Activated CD4-positive, alpha-beta T cell treated with anti-CD3 and anti-CD28 coated beads for 36 hours (primary cell): ENCODE measurements at regions of chr19 and their contacts with region 1.

Region 1: DNA sequence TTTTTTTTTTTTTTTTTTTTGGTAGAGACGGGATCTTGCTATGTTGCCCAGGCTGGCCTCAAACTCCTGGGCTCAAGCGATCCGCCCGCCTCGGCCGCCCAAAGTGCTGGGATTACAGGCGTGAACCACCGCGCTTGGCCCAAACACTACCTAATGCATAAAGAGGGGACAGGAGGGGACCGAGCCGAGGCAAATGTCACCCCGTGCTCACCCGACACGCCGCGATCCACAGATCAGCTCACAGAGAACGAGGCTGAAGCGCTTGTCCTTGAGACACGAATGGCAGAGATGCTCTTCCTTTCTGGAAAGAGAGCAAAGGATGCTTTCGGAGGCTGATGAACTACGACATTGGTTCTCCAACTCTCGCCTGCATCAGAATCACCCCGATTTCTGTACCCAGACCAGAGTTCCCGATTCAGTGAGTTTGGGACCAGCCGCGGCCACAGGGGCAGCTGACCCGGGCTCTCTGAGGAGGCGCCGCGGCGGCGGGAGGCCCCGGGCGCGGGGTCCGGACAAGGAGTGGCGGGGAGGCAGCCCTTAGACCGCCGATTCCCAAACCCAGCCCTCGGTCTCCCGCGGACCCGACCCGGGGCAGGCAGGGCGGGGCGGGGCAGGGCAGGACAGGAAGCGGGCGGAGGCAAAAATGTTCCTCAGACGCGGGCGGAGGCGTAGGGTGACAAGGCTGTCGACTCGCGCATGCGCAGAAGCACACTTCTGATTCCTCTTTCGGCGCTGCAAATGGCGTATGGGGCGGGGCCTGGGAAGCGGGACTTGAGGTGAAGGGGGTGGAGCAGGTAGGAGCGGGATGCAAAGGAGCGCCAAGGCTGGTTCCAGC is at the start of gene ZNF699:
- DNase-seq: peak; percentile 100
- ATAC-seq: peak; percentile 90
- H3K4me3 Mint-ChIP-seq: peak within 1 kb of the TSS; percentile 97
- H3K27ac Mint-ChIP-seq: peak within 1 kb of the TSS; percentile 97
- H3K4me1 Mint-ChIP-seq: peaks cover 13% of the 10 kb centered on the region
- H3K27me3 Mint-ChIP-seq: no peaks in the 10 kb centered on the region
- total RNA-seq, gene ZNF699: 6.7 to 7.1 TPM

Region 2: GRCh38 chr19:9205501-9206113 is 103.7 kb before region 1 on chr19:
- CTCF ChIA-PET with region 1: no interaction called
- POLR2A ChIA-PET with region 1: no interaction called
- intact Hi-C with region 1: no loop called
- DNase-seq: peak; percentile 79
- ATAC-seq: peak; percentile 75
- H3K4me3 Mint-ChIP-seq: no peak overlapping the region
- H3K27ac Mint-ChIP-seq: no peak overlapping the region
- H3K4me1 Mint-ChIP-seq: no peaks in the 10 kb centered on the region
- H3K27me3 Mint-ChIP-seq: peaks cover 9% of the 10 kb centered on the region

Region 3: GRCh38 chr19:9538183-9539058 is 229.1 kb after region 1 on chr19 and contains the start of gene ZNF426:
- CTCF ChIA-PET with region 1: no interaction called
- POLR2A ChIA-PET with region 1: no interaction called
- intact Hi-C with region 1: loop called in 1 of 2 experiments (anchors 5 kb)
- DNase-seq: peak; percentile 95
- ATAC-seq: peak; percentile 97
- H3K4me3 Mint-ChIP-seq: peak within 1 kb of the TSS; percentile 97
- H3K27ac Mint-ChIP-seq: peak within 1 kb of the TSS; percentile 98
- H3K4me1 Mint-ChIP-seq: peaks cover 14% of the 10 kb centered on the region
- H3K27me3 Mint-ChIP-seq: no peaks in the 10 kb centered on the region
- total RNA-seq, gene ZNF426: 10.4 to 12.3 TPM